ENCODE measurements at regions of chr13 and their contacts with region 1.

Region 1: DNA sequence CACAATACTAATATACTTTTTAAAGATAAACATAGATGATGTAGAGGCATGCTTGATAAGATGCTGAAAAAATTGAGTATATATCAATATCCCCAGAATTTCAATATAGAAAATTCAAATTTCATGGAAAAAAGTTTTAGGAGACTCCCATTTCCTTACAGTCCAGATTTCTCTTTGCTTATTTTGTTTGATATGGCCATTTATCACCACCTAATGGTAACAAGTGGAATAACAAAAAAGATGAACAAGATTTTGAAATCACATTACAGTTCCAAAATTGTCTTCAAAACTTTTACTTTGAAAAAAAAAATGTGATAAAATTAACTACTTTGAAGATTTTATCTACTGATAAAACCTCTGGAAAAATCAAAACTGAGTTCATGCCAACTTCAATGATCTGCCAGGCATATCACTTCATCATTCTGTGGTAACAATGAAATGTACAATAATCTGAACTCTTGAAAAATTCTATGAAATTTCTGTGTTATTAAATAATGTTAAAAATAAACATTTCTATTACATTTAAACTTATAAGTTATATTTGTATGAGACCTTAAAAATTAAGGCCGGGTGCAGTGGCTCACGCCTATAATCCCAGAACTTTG is 17.5 kb downstream of the MIPEP start:
- ATAC-seq: no peak
- H3K4me3 ChIP-seq: no peak overlapping the region
- H3K27ac ChIP-seq: no peak overlapping the region
- H3K4me1 ChIP-seq: no peaks in the 10 kb centered on the region

Region 2: DNA sequence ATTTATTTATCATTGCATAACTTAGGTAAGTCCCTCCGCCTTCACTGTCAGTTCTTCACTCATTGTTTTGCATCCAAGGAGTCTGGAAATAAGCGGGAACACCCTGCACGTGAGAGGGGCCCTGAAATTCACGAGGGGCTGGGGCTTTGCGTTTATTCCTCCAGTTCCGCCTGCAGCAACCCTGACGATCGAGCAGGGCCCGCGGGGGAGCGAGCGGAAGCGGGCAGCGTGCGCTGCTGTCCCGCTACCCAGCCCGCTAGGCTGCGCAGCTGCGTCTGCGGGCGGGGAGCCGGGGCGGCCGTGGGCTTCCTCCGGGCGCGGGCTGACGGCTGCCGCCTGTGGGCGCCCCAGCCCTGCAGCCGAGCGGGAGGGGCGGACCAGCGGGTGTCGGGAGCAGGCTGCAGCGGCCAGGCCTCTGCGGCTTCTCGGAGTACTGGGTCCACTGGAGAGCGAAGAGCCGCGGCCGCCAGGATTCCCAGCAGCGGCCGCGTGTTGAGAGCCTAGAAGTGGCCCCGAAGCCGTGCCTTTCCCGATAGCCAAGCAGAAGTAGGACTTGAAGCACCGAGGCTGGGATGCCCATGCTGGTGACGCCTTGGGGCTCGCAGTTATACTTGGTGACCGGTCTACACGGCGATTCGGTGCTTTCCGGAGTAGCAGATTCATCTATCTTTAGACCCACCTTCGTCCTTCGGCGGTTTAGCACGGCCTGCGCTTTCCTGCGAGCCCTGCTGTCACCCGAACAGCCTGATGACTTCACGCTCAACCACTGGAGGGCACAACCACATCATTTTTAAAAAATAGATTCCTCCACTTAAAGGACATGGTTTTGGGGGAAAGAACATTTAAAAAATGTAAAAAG is 405.3 kb before region 1 on chr13:
- in situ Hi-C with region 1: loop called in 8 of 9 experiments (anchors 10 to 25 kb)
- ATAC-seq: peak; percentile 81 to 96 (median 90)
- H3K4me3 ChIP-seq: peak overlapping the region; percentile 26 to 41 (median 37)
- H3K27ac ChIP-seq: peak overlapping the region; percentile 1 to 53
- H3K4me1 ChIP-seq: peaks cover 17 to 21% of the 10 kb centered on the region in 2 donors

Region 3: DNA sequence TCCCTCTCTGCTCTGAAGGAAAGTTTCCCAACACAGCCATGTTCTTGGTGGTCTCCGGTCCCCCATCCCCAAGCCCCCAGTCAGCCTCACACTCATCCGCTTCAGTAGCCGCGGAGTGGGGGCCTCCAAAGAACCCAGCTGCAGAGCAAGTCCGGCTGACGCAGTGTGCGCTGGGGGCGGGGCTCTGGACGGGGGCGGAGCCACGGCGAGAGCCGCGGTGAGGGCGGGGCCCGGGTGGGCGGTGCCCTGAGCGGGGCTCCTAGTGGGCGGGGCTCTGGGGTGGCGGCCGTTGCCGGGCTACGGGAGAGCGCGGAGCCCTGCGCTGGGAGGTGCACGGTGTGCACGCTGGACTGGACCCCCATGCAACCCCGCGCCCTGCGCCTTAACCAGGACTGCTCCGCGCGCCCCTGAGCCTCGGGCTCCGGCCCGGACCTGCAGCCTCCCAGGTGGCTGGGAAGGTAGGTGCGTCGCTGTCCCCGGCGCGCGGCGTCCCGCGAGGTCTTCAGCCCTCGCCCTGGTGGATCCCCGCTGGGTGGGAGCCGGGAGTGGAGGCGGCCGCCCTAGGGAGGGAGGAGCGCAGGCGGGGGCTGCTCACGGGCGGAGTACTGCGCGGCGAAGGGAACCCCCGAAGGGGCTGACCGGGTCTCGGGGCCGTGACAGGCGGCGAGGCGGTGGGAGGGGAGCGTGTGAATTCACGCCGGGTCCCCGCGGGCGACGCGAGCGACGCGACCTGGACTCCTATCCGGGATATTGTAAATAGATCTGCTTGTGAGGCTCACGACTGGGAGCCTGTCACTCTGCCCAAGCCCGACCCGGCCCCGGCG is 292.4 kb before region 1 on chr13:
- in situ Hi-C with region 1: loop called in 1 of 9 experiments (anchors 25 kb)
- ATAC-seq: peak; percentile 85 to 95 (median 92)
- H3K4me3 ChIP-seq: peak overlapping the region; percentile 83 to 99 (median 87)
- H3K27ac ChIP-seq: peak overlapping the region; percentile 4 to 42
- H3K4me1 ChIP-seq: peaks cover 0 to 4% of the 10 kb centered on the region in 2 donors

Measured in motor neuron (in vitro differentiated cells).